ENCODE measurements at regions of chrX and their contacts with region 1.

Region 1: GRCh38 chrX:48539345-48540027 is at the start of gene TBC1D25:
- DNase-seq: peak; percentile 99
- H3K4me3 ChIP-seq: peak within 1 kb of the TSS; percentile 64 to 82 (median 70)
- H3K27ac ChIP-seq: peak within 1 kb of the TSS; percentile 88 to 92 (median 88)
- H3K4me1 ChIP-seq: peaks cover 4 to 13% (median 11%) of the 10 kb centered on the region in 4 donors
- H3K27me3 ChIP-seq: no peaks in the 10 kb centered on the region
- CTCF ChIP-seq: peak; percentile 32 to 49 (median 34)
- EP300 ChIP-seq: no peak
- POLR2A ChIP-seq: peak; percentile 29
- total RNA-seq, gene TBC1D25: 10.3 to 22.4 (median 16.4) TPM

Region 2: GRCh38 chrX:48521353-48522243 is 17.9 kb before region 1 on chrX and contains the start of gene EBP:
- intact Hi-C with region 1: no loop called
- DNase-seq: peak; percentile 97
- H3K4me3 ChIP-seq: peak within 1 kb of the TSS; percentile 60 to 73 (median 65)
- H3K27ac ChIP-seq: peak within 1 kb of the TSS; percentile 79 to 88 (median 82)
- H3K4me1 ChIP-seq: peaks cover 0 to 15% (median 11%) of the 10 kb centered on the region in 4 donors
- H3K27me3 ChIP-seq: no peaks in the 10 kb centered on the region
- CTCF ChIP-seq: no peak
- EP300 ChIP-seq: no peak
- POLR2A ChIP-seq: no peak
- total RNA-seq, gene EBP: 15.7 to 20.7 (median 17.4) TPM

Region 3: GRCh38 chrX:48573690-48574269 is 34.3 kb after region 1 on chrX:
- intact Hi-C with region 1: loop called (anchors 2 kb)
- DNase-seq: no peak
- H3K4me3 ChIP-seq: peak overlapping the region; percentile 73 to 79 (median 76)
- H3K27ac ChIP-seq: peak overlapping the region; percentile 97 to 99 (median 98)
- H3K4me1 ChIP-seq: peaks cover 16 to 24% (median 18%) of the 10 kb centered on the region in 4 donors
- H3K27me3 ChIP-seq: no peaks in the 10 kb centered on the region
- CTCF ChIP-seq: no peak
- EP300 ChIP-seq: no peak
- POLR2A ChIP-seq: no peak

Region 4: DNA sequence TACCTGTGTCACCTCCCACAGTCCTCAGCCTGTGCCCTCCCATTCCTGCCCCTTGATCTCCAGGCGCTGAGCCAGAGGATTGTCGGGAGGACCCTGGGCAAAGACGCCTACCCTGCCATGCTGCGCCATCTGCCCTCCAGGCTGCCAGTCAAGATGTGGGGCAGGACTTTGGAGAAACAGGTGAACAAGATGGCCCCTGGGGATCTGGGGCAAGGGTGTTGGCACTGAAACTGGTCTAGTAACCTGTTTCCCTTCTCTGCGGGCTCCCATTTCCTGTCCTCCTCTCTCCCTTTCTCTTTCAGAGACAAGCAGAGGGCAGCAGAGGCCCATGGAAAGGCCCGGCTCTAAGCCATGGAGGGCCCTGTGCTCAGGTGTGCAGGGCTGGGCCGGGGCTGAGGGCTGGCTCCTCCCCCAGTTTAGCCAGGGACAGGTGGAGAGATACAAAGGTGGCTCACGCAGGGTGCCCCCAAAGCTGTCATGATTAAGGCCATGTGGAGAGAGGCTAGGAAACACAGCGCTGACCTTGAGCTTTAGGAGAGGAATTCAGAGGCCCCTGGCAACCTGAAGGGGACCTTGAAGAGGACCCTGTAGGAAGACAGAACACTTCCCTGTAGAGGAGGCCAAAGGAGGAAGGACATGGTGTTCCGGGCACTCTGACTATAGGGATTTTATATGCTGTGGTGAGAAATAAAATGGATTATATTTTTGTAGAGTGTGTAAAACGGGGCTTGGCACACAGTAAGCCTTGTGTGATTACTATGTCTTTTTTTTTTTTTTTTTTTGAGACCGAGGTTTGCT is 222.4 kb after region 1 on chrX and contains the start of gene GLOD5:
- intact Hi-C with region 1: no loop called
- DNase-seq: no peak
- H3K4me3 ChIP-seq: no peak within 1 kb of the TSS
- H3K27ac ChIP-seq: no peak within 1 kb of the TSS
- H3K4me1 ChIP-seq: no peaks in the 10 kb centered on the region
- H3K27me3 ChIP-seq: peaks cover 0 to 10% (median 3%) of the 10 kb centered on the region in 4 donors
- CTCF ChIP-seq: no peak
- EP300 ChIP-seq: no peak
- POLR2A ChIP-seq: no peak
- total RNA-seq, gene GLOD5: not detected

Measured in esophagus muscularis mucosa (tissue), 4 donors.